ENCODE measurements at regions of chr12 and their contacts with region 1.

Region 1: DNA sequence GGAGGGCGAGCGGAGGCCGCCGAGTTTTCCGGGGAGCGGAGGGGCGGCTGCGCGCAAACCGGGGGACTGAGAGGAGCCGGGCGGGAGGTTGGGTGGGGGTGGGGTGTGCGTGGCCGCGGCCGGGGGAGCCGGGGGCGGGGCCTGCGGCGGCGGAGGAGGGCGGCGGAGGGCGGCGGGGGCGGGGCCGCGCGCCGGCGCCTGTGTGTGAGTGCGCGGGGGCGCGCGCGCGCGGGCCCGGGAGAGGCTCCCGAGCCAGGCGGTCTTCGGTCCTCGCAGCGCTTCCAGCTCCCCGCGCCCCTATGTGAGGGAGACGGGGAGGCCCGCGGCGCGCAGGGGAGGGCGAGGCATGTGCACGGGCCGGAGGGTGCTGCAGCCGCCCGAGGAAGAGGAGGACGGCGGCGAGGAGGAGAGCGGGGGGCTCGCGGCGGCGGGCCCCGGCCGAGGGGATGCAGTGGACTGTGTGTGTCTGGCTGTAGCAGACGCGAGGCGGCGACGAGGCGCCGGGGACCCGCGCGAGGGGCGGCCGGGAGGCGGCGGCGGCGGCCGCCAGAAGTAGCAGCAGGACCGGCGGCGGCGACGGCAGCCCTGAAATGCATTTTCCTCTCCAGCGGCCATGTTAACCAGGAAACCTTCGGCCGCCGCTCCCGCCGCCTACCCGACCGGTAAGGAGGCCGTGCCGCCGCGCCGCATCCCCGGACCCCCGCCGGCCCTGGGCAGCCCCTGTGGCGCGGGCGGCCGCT is at the start of gene DYRK2:
- DNase-seq: peak; percentile 32 to 88
- H3K4me3 ChIP-seq: peak within 1 kb of the TSS; percentile 99 to 100
- H3K27ac ChIP-seq: peak within 1 kb of the TSS; percentile 84 to 97
- H3K4me1 ChIP-seq: peaks cover 0 to 7% of the 10 kb centered on the region in 2 donors
- H3K27me3 ChIP-seq: no peaks in the 10 kb centered on the region
- CTCF ChIP-seq: peak in 1 of 3 experiments; percentile 5
- total RNA-seq, gene DYRK2: 40.1 TPM

Region 2: DNA sequence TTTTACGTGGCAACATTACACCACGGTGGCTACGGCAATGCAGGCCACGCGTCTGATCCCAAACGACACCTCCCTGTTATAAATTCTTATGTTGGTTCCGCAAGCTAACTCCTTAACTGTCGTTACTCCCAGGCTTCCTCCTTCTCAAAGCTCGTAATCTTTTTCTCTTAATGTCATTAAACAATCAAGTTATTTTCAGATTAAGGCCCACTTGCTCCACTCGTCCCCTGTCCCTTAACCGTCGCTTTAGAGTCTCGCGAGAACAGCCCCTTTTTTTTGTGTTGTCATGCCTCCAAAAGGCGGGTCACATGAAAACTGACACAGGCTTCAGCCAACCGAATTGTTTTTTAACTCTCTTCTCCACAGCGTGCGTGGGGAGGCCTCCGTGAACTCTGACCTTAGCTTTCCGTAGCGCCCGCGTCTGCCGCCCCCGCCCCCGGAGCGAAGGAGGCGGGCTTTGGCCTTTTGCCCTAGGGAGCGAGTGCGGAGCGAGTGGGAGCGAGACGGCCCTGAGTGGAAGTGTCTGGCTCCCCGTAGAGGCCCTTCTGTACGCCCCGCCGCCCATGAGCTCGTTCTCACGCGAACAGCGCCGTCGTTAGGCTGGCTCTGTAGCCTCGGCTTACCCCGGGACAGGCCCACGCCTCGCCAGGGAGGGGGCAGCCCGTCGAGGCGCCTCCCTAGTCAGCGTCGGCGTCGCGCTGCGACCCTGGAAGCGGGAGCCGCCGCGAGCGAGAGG is 379.6 kb before region 1 on chr12 and contains the start of gene CAND1:
- intact Hi-C with region 1: loop called (anchors 5 kb)
- DNase-seq: peak; percentile 90 to 99
- H3K4me3 ChIP-seq: peak within 1 kb of the TSS; percentile 78 to 96
- H3K27ac ChIP-seq: peak within 1 kb of the TSS; percentile 93 to 99
- H3K4me1 ChIP-seq: peaks cover 0 to 30% of the 10 kb centered on the region in 2 donors
- H3K27me3 ChIP-seq: no peaks in the 10 kb centered on the region
- CTCF ChIP-seq: no peak
- total RNA-seq, gene CAND1: 31.6 TPM

Region 3: DNA sequence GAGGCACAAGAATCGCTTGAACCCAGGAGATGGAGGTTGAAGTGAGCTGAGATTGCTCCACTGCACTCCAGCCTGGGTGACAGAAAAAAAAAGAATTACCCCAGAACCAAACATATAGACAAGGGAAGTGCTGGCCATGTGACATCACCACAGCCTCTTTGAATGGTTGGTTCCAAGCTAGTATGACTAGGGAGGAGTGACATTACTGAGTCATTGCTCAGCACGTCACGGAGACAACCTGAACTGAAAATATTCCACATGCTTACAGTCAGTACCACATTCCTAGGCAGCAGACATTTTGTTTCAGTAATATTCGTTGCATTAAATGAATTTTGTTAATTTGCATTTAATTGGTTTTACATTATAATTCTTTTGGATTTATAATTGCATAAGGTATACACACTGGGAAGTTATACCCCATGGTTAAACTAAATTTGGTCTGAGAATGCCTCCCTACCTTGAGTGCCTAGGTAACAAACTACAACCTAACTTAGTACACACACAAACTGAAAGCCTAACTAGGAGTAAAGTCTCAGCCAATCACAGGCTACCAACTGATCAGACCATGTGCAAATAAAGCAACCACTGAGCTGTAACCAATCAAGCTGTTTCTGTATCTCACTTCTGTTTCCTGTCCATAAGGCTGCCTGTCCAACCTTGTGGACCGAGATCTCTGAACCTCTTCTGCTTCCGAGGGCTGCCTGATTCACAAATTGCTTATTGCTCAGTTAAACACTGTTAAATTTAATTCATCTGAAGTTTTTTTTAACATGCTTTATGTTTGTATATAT is 215.1 kb before region 1 on chr12:
- intact Hi-C with region 1: loop called (anchors 5 kb)
- DNase-seq: no peak
- H3K4me3 ChIP-seq: no peak overlapping the region
- H3K27ac ChIP-seq: peak overlapping the region; percentile 68 to 74
- H3K4me1 ChIP-seq: peaks cover 7 to 18% of the 10 kb centered on the region in 2 donors
- H3K27me3 ChIP-seq: no peaks in the 10 kb centered on the region
- CTCF ChIP-seq: no peak

Region 4: DNA sequence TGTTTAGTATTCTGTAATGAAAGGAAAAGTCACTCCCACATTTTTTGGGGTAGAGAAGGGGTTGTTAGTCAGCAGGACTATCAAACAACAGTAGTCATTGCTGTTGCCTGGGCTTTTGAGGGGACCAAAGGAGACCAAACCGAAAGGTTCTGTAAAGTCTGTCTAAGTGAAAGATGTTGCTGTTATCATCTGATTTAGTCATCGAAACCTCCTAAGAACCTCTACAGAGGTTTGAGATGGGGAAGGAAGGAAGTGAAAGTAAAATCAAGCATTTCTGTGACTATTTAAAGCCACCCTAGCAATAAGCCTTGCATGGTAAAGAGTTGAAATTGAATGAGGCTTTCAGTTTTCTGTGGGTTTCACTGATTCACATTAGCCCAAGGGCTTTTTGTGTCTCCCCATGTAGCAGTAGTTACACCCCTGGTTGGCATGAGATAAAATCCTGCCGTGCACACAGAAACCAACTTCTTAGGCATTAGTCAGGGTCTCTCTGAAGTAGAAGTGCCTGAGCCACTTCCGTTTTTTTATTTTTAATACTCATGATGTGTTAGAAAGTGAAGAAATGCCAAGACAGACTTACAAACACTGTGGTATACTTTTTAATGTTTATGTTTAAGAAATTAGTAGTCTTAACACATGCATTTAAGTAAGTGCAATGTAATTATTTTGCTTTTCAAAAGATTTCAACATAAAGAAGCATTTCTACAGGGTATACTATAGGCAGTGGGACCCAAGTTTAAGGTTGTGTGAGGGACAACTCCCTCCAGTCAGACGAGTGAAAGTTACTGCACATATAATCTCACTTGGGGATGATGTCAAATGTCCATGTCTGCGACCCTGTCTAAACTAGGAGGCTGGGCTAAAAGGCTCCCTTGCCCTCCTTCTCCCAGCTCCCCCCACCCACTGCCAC is 50.2 kb after region 1 on chr12:
- intact Hi-C with region 1: loop called (anchors 5 kb)
- DNase-seq: no peak
- H3K4me3 ChIP-seq: peak overlapping the region; percentile 32 to 63
- H3K27ac ChIP-seq: peak overlapping the region; percentile 30 to 55
- H3K4me1 ChIP-seq: peaks cover 0 to 6% of the 10 kb centered on the region in 2 donors
- H3K27me3 ChIP-seq: no peaks in the 10 kb centered on the region
- CTCF ChIP-seq: no peak

Region 5: DNA sequence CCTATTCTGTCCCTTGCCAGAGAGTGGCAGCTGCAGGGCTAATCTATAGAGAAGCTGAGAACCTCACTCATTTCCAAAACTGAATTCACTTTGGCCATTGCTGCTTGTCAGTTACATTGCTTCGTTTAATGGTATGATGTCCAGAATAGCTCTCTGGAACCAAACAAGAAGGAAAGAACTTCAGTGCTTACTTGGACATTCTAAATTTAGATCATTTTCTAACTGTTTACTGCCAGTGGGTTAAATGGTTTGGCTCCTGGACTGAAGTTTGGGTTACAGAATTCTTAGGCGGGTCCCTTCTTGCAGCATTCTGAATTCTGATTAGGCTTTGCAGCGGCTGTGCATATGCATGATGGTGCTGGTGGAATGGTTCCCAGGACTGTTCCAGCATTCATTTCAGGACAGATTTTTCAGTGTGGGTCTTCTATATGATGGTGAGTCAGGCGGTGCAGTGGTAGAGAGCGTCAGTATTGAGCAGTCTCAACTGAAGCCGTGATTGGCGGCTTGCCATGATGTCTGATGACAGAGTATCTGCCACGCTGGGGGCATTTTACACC is 148.6 kb after region 1 on chr12:
- intact Hi-C with region 1: loop called (anchors 5 kb)
- DNase-seq: peak in 1 of 2 donors; percentile 65
- H3K4me3 ChIP-seq: no peak overlapping the region
- H3K27ac ChIP-seq: peak overlapping the region in 1 of 2 donors; percentile 4
- H3K4me1 ChIP-seq: peaks cover 0 to 13% of the 10 kb centered on the region in 2 donors
- H3K27me3 ChIP-seq: no peaks in the 10 kb centered on the region
- CTCF ChIP-seq: no peak

Region 6: DNA sequence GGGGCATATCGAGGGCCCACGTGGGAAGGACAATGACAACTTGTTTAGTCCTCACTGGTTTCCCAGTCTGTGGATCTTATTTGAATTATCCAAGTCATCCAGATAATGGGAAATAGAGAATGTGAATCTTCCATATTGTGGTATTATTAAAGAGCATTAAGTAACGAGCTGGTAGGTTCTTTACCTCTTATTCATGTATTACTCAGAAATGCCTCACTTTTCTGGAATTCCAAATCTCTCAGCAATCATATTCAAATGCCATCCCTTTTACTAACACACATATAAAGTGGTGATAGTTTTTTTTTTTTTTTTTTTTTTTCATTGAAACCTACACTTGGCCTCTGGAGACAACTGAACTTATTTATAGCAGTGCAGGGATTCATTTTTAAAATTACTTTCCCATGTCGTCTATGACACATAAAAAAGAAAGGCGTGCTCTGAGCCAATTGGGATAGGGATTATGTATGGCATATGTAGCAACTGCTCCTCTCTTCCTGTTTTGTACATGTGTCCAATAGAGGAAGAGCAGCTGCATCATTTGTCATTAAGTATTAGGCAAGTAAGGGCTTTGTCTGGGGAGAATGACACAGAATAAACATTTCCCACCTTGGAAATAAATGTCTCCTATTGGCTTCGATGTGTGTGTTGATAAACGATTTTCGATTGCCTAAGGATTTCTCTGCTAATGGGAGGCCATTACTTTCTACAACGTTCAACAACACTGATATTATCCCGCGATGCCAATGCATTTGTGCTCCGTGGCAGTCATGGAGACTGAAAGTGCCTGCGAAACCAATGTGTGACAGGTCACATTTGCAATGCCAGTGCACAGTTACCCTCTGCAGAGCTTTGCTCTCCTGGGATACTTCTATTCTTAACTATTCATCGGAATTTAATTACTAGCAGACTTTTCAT is 261.9 kb after region 1 on chr12:
- intact Hi-C with region 1: loop called (anchors 10 kb)
- DNase-seq: no peak
- H3K4me3 ChIP-seq: no peak overlapping the region
- H3K27ac ChIP-seq: no peak overlapping the region
- H3K4me1 ChIP-seq: peaks cover 0 to 7% of the 10 kb centered on the region in 2 donors
- H3K27me3 ChIP-seq: no peaks in the 10 kb centered on the region
- CTCF ChIP-seq: no peak

Measured in ascending aorta (tissue), 2 donors.